ENCODE measurements at regions of chr5 and their contacts with region 1.

Region 1: GRCh38 chr5:746258-746761 is 38.2 kb downstream of the ZDHHC11B start:
- DNase-seq: no peak

Region 2: DNA sequence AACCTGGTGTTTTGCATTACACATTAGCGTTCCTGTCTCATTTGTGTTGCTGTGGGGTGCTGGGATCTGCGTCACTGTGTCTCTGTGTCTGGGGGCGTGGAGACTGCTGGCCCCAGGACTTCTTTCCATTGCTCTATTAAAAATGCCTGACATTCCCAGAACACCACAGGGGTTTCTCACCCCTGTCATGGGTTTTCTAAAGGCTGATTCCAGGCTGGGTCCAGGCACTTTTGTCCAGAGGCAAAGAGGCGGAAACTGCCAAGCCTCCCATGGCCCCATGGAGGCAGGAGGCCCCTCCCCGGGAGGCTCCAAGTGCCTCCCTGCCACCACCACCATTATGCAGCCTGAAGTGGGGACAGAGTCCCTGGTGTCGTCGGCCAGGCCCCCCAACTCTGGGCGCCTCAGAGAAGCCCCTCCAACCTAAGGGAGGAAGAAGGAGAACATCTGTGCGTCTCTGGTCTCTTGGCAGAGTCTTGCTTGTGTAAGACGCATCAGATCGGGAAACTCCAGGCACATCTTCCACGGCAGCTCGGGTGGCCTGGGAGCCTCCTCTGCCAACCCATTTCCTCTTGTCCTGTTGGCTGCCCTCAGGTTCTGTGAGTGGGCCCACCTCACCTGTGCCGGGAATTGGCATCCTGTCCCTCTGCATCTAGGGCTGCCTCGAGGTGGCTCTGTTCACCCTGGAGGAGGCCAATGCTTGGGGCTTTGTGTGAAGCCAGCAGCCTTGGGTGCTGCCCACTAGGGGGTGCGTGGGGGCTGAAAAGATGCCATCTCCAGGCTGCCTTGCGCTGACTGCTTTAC is 668.1 kb before region 1 on chr5:
- in situ Hi-C with region 1: no loop called
- DNase-seq: peak; percentile 74

Region 3: DNA sequence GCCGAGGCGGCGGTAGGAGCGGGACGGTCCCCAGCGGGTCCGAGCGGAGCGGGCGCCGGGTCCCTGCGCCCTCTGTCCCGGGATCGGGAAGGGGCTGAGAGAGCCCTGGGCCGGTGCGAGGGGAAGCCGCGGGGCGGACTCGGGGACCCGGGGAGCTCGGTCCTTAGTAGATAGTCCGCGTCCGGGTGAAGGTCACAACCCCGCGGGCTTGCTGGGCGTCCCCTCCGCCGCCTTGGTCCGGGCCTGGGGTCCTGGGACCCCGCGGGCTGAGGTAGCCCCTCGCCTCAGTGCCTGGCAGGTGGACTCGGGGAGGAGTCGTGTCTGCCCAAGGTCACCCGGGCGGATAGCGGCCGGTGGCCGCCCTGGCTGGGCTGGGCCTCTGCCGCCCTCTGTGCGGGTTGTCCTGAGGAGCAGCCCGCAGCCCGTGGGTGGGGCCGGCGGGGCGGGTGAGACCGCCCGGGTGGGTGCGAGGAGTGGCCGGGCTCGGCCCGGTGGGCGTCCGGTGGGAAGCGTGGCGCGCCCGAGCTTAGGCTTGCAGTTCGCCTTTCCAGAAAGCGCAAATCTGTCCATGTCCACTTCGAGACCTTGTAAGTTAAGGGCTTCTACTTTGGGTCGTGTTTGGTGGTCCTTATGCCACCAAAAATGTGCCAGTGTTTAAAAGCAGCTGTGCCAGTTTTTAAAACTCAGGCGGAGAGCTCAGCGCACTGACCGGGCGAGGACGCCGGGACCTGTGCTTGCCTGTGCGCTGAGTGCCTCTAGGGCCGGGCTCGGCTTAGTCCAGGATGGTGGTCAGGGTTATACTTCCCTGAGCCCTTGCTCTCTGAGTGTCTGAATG is 527.6 kb before region 1 on chr5:
- in situ Hi-C with region 1: no loop called
- DNase-seq: peak; percentile 40

Region 4: DNA sequence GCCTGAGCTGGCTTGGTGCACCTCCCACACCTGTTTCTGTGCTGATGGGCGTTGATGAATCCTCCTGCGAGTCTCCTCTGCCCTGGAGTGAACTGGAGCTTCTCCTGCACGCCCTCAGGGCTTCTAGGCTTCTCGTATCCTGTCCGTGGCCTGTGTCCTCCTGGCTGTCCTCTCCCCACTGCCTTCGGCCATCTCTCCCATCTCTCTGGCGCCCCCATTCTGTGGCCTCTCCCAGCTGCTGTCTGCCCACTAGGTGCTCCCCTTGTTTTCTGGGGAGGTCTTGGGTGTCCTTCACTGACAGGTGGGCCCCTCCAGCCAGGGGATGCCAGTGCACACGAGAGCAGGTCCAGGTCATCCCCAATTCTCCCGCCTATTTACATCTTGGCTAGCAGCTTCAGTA is 396.0 kb before region 1 on chr5:
- in situ Hi-C with region 1: no loop called
- DNase-seq: no peak

Region 5: GRCh38 chr5:849651-850301 is 103.5 kb after region 1 on chr5:
- in situ Hi-C with region 1: loop called (anchors 5 kb)
- DNase-seq: no peak

Measured in KBM-7 (cell line).